Activated CD4-positive, alpha-beta memory T cell treated with anti-CD3 and anti-CD28 coated beads for 36 hours (primary cell): ENCODE measurements at regions of chr5 and their contacts with region 1.

Region 1: GRCh38 chr5:151115274-151115905 is 34.6 kb upstream of the TNIP1 start:
- DNase-seq: peak; percentile 80
- H3K4me3 Mint-ChIP-seq: no peak overlapping the region
- H3K27ac Mint-ChIP-seq: no peak overlapping the region
- H3K4me1 Mint-ChIP-seq: no peaks in the 10 kb centered on the region
- H3K27me3 Mint-ChIP-seq: no peaks in the 10 kb centered on the region

Region 2: DNA sequence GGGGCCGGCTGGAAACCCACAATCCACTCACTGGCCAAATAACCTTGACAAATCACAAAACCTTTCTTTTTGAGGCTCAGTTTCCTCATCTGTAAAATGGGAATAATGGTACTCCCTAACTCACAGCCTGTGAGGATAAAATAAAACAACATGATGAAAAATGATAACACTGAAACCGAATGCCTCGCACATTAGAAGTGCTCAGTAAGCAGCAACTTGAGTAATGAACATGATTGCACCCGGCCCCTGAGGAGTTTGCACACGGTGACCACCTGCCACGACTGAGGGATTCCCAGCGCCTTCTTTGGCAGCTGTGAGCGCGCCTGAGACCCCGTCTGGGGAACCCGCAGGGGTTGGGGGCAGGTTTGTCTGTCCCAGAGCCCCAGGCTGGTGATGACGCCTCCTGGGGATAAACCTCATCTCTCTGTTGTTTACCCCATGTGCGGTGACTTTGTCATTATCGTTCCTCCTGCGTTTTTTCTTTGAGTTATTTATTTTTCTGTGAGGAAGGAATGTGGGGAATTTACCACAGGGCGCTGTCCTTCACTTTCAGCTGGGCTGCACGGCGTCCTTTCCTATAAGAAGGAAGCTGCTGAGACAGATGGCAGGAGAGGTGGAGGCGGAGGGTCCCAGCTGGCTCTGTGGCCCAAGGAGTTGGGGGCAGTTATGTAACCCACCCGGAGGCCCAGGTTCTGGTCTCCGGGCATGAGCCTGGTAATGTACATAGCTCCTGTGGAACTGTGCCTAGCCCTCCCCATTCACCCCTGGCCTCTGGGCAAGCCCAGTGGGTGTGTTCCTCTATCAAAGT is 477.9 kb before region 1 on chr5:
- CTCF ChIA-PET with region 1: no interaction called
- POLR2A ChIA-PET with region 1: no interaction called
- intact Hi-C with region 1: no loop called
- DNase-seq: no peak
- H3K4me3 Mint-ChIP-seq: no peak overlapping the region
- H3K27ac Mint-ChIP-seq: no peak overlapping the region
- H3K4me1 Mint-ChIP-seq: no peaks in the 10 kb centered on the region
- H3K27me3 Mint-ChIP-seq: peaks cover 10% of the 10 kb centered on the region

Region 3: DNA sequence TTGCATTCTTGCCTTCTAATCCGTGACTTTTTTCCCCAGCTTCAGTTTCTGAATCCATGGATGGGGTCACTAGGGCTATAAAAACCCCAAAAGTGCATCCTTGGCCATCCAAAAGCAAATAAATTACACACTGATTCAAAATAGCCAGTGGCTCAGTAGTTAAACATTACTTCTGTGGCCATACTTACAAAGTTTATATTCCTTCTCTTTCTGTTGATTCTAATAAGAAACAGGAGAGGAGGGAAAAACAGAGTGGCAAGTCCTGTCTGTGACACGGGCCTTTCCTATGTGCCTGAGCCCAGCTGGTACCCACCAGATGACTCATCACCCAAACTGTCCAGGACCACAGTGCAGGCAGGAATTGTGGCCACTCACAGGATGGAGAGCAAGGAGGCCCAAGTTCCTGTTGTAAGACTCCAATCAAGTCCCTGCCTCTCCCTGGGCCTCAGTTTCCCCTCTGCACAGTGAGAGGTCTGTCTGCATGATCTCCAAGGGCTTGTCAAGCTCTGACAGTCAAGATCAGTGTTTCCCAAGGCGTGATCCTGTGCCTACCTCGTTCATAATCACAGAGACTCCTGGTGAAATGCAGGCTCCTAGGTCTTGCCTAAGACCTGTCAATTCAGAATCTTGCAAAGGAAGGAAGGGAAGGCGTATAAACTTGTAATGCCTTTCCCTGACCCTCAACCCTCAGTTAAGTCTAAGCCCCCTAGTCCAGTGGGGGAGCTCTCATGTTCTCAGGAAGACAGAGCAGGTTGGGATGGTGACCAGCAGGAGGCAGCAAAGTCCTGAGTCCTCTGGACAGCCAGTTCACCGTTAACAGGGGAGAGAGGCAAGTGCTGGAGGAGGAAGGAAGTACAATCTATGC is 64.1 kb before region 1 on chr5:
- CTCF ChIA-PET with region 1: interaction called, 382 read pairs
- POLR2A ChIA-PET with region 1: no interaction called
- intact Hi-C with region 1: loop called (anchors 1 kb)
- DNase-seq: peak; percentile 79
- H3K4me3 Mint-ChIP-seq: no peak overlapping the region
- H3K27ac Mint-ChIP-seq: peak overlapping the region; percentile 67
- H3K4me1 Mint-ChIP-seq: peaks cover 15% of the 10 kb centered on the region
- H3K27me3 Mint-ChIP-seq: no peaks in the 10 kb centered on the region

Region 4: DNA sequence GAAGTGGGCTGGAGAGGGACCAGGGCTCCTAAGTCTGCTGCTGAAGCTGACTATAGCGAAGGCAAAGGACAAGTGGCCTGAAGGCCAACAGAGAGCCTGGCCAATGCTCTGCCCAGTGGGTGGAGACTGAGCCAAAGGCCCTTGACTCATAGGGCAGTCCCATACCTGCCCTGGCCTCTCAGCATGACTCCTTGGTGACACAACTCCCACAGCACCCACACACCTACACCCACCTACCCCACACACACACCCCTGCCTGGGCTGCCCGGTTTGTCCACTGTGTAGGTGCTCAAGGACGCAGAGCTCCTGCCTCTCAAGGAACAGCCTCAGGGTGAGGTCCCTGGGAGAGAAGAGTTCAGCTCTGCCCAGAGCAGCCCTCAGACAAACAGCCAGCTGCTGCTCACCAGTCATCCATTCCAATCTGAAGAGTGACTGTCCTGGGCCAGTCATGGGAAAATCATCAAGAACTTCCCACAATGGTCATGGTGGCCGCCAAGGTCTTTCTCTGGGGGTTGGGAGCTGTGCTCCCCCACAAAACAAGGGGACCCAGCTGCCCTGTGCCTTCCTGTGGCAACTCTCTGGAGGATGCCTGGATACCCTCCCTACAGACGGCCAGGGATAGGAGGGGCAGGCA is 39.6 kb before region 1 on chr5:
- CTCF ChIA-PET with region 1: interaction called, 23 read pairs
- POLR2A ChIA-PET with region 1: interaction called, 4 read pairs
- intact Hi-C with region 1: no loop called
- DNase-seq: peak; percentile 63
- H3K4me3 Mint-ChIP-seq: peak overlapping the region; percentile 85
- H3K27ac Mint-ChIP-seq: peak overlapping the region; percentile 90
- H3K4me1 Mint-ChIP-seq: peaks cover 77% of the 10 kb centered on the region
- H3K27me3 Mint-ChIP-seq: no peaks in the 10 kb centered on the region

Region 5: DNA sequence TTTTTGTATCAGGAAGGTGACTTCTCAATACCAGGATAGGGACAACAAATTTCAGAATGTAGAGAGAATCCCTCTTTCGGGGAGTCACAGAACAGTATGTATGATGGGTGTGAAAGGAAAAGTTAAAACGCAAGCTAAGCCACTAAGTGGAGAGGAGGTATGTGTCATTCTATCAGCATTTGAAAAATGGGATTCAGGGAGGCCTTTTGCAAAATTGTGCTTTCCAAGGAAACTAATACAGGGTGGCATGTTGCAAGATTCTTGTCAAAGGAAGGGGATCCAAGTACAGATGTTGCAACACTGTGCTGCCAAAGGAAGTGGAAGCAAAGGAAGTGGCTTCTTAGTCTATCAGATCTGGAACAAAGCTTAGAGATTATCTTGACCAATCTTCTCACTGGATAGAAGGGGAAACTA is 21.9 kb before region 1 on chr5:
- CTCF ChIA-PET with region 1: interaction called, 60 read pairs
- POLR2A ChIA-PET with region 1: no interaction called
- intact Hi-C with region 1: no loop called
- DNase-seq: no peak
- H3K4me3 Mint-ChIP-seq: peak overlapping the region; percentile 65
- H3K27ac Mint-ChIP-seq: peak overlapping the region; percentile 92
- H3K4me1 Mint-ChIP-seq: peaks cover 64% of the 10 kb centered on the region
- H3K27me3 Mint-ChIP-seq: no peaks in the 10 kb centered on the region

Region 6: DNA sequence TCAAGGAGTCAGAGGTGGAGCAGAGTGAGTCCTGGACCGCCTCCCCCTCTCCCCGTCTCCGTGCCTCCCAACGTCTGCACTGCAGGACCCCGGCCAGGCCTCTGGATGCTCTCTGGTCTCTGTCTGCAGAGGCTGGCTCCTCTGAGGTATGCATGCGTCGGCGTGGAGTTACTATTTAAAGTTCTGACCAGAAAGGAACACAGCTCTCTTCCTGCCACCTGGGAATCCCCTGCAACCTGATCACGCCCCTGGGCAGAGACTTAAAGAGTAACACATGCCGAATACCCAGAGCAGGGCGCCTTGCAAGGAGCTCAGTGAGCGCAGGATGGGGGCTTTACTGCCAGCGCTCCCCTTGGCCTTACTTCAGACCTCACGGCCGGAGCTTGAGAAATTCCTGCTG is 26.1 kb after region 1 on chr5:
- CTCF ChIA-PET with region 1: interaction called, 21 read pairs
- POLR2A ChIA-PET with region 1: interaction called, 4 read pairs
- intact Hi-C with region 1: no loop called
- DNase-seq: peak; percentile 84
- H3K4me3 Mint-ChIP-seq: peak overlapping the region; percentile 55
- H3K27ac Mint-ChIP-seq: peak overlapping the region; percentile 76
- H3K4me1 Mint-ChIP-seq: peaks cover 88% of the 10 kb centered on the region
- H3K27me3 Mint-ChIP-seq: no peaks in the 10 kb centered on the region

Region 7: GRCh38 chr5:151164686-151165392 is 49.4 kb after region 1 on chr5:
- CTCF ChIA-PET with region 1: interaction called, 101 read pairs
- POLR2A ChIA-PET with region 1: no interaction called
- intact Hi-C with region 1: no loop called
- DNase-seq: peak; percentile 90
- H3K4me3 Mint-ChIP-seq: no peak overlapping the region
- H3K27ac Mint-ChIP-seq: no peak overlapping the region
- H3K4me1 Mint-ChIP-seq: peaks cover 18% of the 10 kb centered on the region
- H3K27me3 Mint-ChIP-seq: no peaks in the 10 kb centered on the region

Region 8: DNA sequence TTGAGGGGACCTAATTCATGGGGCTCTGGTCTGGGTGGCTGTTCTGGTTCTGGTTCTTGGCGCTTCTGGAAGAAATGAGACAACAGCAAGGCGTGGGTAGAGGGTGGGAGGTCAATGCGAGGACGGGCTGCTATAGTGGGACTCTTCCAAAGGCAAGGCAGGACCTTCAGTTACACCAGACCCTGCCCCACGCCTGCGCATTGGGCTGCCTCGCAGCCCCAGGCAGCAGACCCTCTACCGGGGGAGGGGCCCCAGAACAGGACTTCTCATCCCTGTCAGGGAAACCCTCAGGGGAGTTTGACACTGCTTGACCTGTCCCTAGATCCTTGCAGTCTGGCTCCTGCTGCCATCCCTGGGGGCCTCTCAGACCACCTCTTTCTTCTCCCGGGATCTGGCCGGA is 90.0 kb after region 1 on chr5:
- CTCF ChIA-PET with region 1: no interaction called
- POLR2A ChIA-PET with region 1: no interaction called
- intact Hi-C with region 1: no loop called
- DNase-seq: no peak
- H3K4me3 Mint-ChIP-seq: no peak overlapping the region
- H3K27ac Mint-ChIP-seq: peak overlapping the region; percentile 40
- H3K4me1 Mint-ChIP-seq: peaks cover 50% of the 10 kb centered on the region
- H3K27me3 Mint-ChIP-seq: no peaks in the 10 kb centered on the region